ENCODE measurements at regions of chr13 and their contacts with region 1.

Region 1: GRCh38 chr13:97948041-97948440 is 5.4 kb upstream of the IPO5 start:
- DNase-seq: no peak
- H3K4me3 ChIP-seq: no peak overlapping the region
- H3K27me3 ChIP-seq: no peaks in the 10 kb centered on the region
- CTCF ChIP-seq: no peak

Region 2: GRCh38 chr13:97600458-97601080 is 347.5 kb before region 1 on chr13:
- CTCF ChIA-PET with region 1: no interaction called
- POLR2A ChIA-PET with region 1: no interaction called
- DNase-seq: peak; percentile 4
- H3K4me3 ChIP-seq: no peak overlapping the region
- H3K27me3 ChIP-seq: no peaks in the 10 kb centered on the region
- CTCF ChIP-seq: no peak

Region 3: DNA sequence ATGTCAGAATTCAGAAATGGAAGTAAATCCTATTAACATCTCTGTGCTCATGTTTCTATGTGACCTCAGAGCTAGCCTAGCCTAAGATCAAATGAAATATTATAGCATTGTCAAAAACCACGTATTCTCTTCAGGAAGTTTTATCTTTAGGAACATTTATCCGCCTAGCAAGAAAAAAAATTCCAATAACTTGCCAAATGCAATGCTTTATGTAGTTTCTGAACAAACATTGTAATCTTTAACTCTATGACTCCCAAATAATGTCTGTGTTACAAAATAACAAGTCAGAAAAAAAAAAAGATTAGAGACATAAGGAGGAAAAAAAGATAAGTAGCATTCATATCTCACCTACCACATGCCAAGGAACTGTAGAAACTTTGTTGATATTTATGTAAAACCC is 13.0 kb before region 1 on chr13:
- CTCF ChIA-PET with region 1: no interaction called
- POLR2A ChIA-PET with region 1: interaction called, 15 read pairs
- DNase-seq: no peak
- H3K4me3 ChIP-seq: no peak overlapping the region
- H3K27me3 ChIP-seq: no peaks in the 10 kb centered on the region
- CTCF ChIP-seq: no peak